Activated CD4-positive, alpha-beta T cell treated with anti-CD3 and anti-CD28 coated beads, Interleukin-2, amount 10 ng/mL, durations not matched to agents 24 days and 14 days (primary cell): ENCODE measurements at regions of chr1 and their contacts with region 1.

Region 1: DNA sequence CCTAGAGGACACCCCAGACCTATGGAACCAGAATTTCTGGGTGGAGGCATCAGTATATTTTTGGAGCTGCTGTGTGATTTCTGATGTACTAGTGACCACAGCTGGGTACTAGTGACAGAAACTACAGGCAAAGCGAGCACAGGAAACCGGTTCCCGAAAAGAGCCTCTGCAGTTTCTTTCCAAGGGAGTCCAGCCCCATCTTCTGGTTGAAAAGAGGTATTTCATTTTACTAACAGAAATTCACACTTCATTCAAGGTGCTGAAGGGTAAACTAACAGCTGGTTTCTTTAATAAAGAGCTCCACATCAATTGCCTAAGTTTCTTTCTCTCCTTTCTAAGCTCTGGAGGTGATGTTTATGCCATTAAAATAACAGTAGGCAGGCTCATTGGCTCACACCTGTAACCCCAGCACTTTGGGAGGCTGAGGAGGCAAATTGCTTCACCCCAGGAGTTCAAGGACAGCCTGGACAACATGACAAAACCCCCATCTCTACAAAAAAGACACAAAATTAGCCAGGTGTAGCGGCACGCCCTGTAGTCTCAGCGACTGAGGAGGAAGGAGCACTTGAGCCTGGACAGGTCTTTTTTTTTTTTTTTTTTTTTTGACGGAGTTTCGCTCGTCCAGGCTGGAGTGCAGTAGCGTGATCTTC is 22.0 kb downstream of the THAP3 start:
- DNase-seq: peak; percentile 78
- H3K4me3 Mint-ChIP-seq: no peak overlapping the region
- H3K27ac Mint-ChIP-seq: no peak overlapping the region
- H3K4me1 Mint-ChIP-seq: peaks cover 2% of the 10 kb centered on the region
- H3K27me3 Mint-ChIP-seq: no peaks in the 10 kb centered on the region

Region 2: DNA sequence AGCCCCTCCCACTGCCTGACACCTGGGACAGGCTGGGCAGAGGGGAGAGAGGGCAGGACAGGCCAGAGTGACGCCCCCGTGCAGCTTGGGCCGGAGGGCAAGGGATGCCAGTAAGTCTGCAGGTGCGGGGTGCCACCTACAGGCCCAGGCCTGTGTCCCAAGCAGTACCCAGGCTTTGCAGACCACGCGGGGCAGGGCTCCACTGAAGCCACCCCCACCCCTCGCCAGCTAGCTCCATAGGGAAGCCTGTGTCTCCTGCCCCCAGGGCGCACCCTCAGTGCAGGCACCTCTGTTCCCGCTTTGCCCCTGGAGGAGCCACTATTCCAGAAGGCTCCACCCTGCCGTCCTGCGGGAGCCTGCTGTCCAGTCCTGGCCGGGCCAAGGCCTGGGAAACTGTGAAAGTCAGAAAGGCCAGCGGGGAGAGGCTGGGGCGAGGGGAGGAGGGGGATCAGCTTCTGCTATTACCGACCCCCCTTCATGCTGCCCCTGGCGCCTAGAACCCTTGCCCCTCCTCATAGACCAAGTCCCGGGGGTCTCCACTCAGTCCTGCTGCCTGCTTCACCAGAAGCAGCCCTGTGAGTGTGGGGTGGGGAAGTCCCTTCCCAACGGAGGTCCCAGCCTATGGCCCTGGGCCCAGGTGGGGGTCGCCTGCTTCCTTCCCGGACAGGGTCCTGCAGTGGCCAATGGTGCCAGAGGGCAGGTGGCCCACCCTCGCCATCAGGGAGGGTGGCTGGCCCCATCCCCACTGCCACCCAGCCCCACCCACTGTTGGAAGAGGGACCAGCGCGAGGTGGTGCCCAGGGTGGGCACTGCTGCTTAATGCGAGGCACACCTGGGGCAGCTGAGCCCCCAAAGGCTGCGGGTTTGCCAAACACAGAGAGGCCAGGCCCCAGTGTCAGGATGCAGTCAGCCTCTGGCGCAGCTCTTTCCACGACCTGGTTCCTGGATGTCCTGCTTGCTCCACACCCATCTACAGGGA is 546.5 kb before region 1 on chr1:
- intact Hi-C with region 1: no loop called
- DNase-seq: no peak
- H3K4me3 Mint-ChIP-seq: no peak overlapping the region
- H3K27ac Mint-ChIP-seq: no peak overlapping the region
- H3K4me1 Mint-ChIP-seq: no peaks in the 10 kb centered on the region
- H3K27me3 Mint-ChIP-seq: no peaks in the 10 kb centered on the region

Region 3: GRCh38 chr1:6224718-6225117 is 421.9 kb before region 1 on chr1:
- intact Hi-C with region 1: no loop called
- DNase-seq: no peak
- H3K4me3 Mint-ChIP-seq: no peak overlapping the region
- H3K27ac Mint-ChIP-seq: no peak overlapping the region
- H3K4me1 Mint-ChIP-seq: peaks cover 2% of the 10 kb centered on the region
- H3K27me3 Mint-ChIP-seq: no peaks in the 10 kb centered on the region

Region 4: GRCh38 chr1:6489799-6490180 is 156.8 kb before region 1 on chr1:
- intact Hi-C with region 1: loop called (anchors 1 kb)
- DNase-seq: peak; percentile 95
- H3K4me3 Mint-ChIP-seq: peak overlapping the region; percentile 81
- H3K27ac Mint-ChIP-seq: peak overlapping the region; percentile 83
- H3K4me1 Mint-ChIP-seq: peaks cover 20% of the 10 kb centered on the region
- H3K27me3 Mint-ChIP-seq: peaks cover 13% of the 10 kb centered on the region

Region 5: GRCh38 chr1:6613361-6614018 is 33.1 kb before region 1 on chr1 and contains the start of gene PHF13:
- intact Hi-C with region 1: no loop called
- DNase-seq: peak; percentile 100
- H3K4me3 Mint-ChIP-seq: peak within 1 kb of the TSS; percentile 95
- H3K27ac Mint-ChIP-seq: peak within 1 kb of the TSS; percentile 85
- H3K4me1 Mint-ChIP-seq: peaks cover 21% of the 10 kb centered on the region
- H3K27me3 Mint-ChIP-seq: peaks cover 2% of the 10 kb centered on the region
- total RNA-seq, gene PHF13: 19.1 and 20.1 TPM in 2 replicates

Region 6: DNA sequence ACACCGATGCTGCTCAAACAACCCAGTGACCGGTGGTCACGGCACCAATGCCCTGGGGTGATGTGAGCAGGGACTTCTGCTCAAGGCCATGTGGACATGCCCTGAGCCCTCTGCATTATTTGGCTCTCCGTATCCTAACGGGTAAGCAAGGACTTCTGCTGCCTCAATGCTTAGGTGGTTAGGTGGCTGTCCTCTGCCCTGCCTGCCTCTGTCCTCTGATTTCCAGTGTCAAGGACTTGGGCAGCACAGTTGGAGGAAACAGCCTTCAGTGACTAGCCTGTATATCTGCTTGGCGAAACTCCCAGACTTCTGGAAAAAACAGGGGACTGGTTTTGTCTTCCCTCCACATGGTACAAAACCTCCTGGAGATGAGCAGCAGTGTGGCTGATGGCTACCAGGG is 20.5 kb after region 1 on chr1:
- intact Hi-C with region 1: no loop called
- DNase-seq: no peak
- H3K4me3 Mint-ChIP-seq: no peak overlapping the region
- H3K27ac Mint-ChIP-seq: no peak overlapping the region
- H3K4me1 Mint-ChIP-seq: no peaks in the 10 kb centered on the region
- H3K27me3 Mint-ChIP-seq: no peaks in the 10 kb centered on the region